WTC11 (cell line): ENCODE measurements at regions of chr5 and their contacts with region 1.

Region 1: DNA sequence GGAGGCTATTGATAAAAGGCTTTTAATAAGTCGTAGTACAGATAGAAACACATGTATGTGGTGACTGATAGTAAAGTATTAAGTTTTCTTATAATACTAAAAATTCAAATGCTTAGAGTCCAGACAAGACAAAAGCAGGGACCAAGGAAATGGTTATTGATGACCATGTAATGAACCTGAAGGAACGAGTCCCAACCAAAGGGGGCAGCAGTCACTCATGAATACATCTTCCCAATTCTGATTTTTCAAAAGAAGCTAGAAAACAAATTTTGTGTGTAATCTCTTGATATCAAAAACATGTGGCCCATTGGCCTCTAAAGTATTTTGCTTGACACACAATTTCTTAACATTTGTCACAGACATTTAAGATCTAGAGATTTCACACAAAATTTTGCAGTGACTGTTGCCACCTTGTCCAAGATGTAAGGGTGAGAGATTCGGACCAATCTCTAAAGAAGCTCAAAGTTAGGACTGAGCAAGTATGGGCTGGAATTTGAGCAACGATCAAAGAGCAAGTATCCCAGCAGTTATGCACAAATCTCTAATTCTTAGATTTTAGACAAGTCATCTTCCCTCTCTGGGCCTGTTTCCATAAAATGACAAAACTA is 66.8 kb downstream of the ARL15 start:
- DNase-seq: no peak
- ATAC-seq: peak; percentile 69
- H3K4me3 Mint-ChIP-seq: no peak overlapping the region
- H3K27ac Mint-ChIP-seq: no peak overlapping the region
- H3K4me1 Mint-ChIP-seq: no peaks in the 10 kb centered on the region
- H3K27me3 Mint-ChIP-seq: no peaks in the 10 kb centered on the region
- CTCF ChIP-seq: peak; percentile 54

Region 2: DNA sequence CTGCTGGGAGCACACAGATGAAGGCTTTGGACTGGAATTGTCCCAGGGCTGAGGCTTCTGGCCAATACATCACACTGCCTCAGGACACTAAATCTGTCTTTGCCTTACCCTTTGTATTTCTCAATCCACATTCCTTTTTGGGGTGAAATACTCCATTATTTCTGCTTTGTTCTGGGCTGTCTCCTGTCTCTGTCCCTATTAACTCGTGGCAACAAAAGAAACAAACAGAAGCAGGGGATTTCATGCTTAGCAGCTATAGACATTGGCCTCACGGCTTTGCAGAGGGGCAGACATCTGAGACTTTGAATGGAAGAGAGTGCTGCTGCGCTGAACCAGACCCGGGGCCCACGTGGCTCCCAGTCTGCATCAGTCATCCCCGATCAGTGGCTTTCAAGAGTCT is 63.0 kb before region 1 on chr5:
- CTCF ChIA-PET with region 1: no interaction called
- POLR2A ChIA-PET with region 1: no interaction called
- DNase-seq: no peak
- ATAC-seq: peak; percentile 86
- H3K4me3 Mint-ChIP-seq: no peak overlapping the region
- H3K27ac Mint-ChIP-seq: peak overlapping the region; percentile 63; the same call in 1 of the 2 replicates
- H3K4me1 Mint-ChIP-seq: peaks cover 24% of the 10 kb centered on the region
- H3K27me3 Mint-ChIP-seq: no peaks in the 10 kb centered on the region
- CTCF ChIP-seq: no peak

Region 3: GRCh38 chr5:54254482-54255198 is 11.1 kb after region 1 on chr5:
- CTCF ChIA-PET with region 1: interaction called, 14 read pairs
- POLR2A ChIA-PET with region 1: no interaction called
- DNase-seq: no peak
- ATAC-seq: peak; percentile 73
- H3K4me3 Mint-ChIP-seq: no peak overlapping the region
- H3K27ac Mint-ChIP-seq: no peak overlapping the region
- H3K4me1 Mint-ChIP-seq: peaks cover 30% of the 10 kb centered on the region
- H3K27me3 Mint-ChIP-seq: no peaks in the 10 kb centered on the region
- CTCF ChIP-seq: no peak

Region 4: GRCh38 chr5:54310433-54311175 is 67.0 kb after region 1 on chr5 and contains the start of gene ARL15:
- CTCF ChIA-PET with region 1: interaction called, 18 read pairs
- POLR2A ChIA-PET with region 1: interaction called, 4 read pairs
- DNase-seq: peak; percentile 98
- ATAC-seq: peak; percentile 90
- H3K4me3 Mint-ChIP-seq: peak within 1 kb of the TSS; percentile 92
- H3K27ac Mint-ChIP-seq: peak within 1 kb of the TSS; percentile 93
- H3K4me1 Mint-ChIP-seq: peaks cover 36% of the 10 kb centered on the region
- H3K27me3 Mint-ChIP-seq: peaks cover 20% of the 10 kb centered on the region
- CTCF ChIP-seq: no peak
- total RNA-seq, gene ARL15: 20.1 to 23.9 TPM (median 21.5 TPM) in 3 replicates

Region 5: DNA sequence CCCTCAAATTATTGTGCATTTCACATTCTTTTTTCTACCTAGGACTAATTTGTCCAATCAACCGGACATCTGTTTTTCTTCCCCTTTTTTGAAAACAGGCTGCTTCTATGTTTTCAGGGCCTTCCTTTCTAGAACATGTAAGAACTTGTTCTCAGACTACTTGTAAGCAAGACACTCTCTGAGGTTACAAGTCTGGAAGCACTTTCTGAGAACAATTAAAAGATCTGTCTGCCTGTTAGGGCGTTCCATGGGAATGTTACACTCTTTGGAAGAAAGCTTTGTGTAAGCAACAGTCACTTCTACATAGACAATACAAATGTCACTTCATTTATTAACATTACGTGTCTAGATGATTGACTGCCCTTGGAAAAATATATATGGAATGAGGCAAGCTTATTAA is 161.0 kb after region 1 on chr5:
- CTCF ChIA-PET with region 1: interaction called, 11 read pairs
- POLR2A ChIA-PET with region 1: no interaction called
- DNase-seq: no peak
- ATAC-seq: no peak
- H3K4me3 Mint-ChIP-seq: no peak overlapping the region
- H3K27ac Mint-ChIP-seq: peak overlapping the region; percentile 14
- H3K4me1 Mint-ChIP-seq: peaks cover 24% of the 10 kb centered on the region
- H3K27me3 Mint-ChIP-seq: no peaks in the 10 kb centered on the region
- CTCF ChIP-seq: no peak

Region 6: GRCh38 chr5:54415896-54416601 is 172.5 kb after region 1 on chr5:
- CTCF ChIA-PET with region 1: interaction called, 32 read pairs
- POLR2A ChIA-PET with region 1: no interaction called
- DNase-seq: no peak
- ATAC-seq: no peak
- H3K4me3 Mint-ChIP-seq: no peak overlapping the region
- H3K27ac Mint-ChIP-seq: no peak overlapping the region
- H3K4me1 Mint-ChIP-seq: peaks cover 16% of the 10 kb centered on the region
- H3K27me3 Mint-ChIP-seq: no peaks in the 10 kb centered on the region
- CTCF ChIP-seq: no peak

Region 7: DNA sequence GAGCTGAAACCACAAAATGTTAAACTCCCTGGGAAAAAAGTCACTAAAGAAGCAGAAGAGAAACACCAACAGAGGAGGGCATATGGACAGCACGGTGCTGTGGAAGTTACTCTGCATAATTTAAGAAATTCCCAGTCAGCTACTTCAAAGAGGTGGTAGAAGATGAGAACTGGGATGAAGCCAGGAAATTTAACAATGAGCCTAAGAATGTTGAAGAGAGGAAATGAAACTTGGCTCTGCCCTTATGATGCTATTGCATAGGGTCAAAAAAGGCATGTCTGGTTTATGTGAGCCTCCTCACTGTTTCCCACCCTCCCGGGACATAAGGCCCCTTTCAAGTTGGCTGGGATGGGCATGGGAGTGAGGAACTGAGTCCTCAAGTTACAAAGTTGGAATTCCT is 248.6 kb after region 1 on chr5:
- CTCF ChIA-PET with region 1: interaction called, 49 read pairs
- POLR2A ChIA-PET with region 1: no interaction called
- DNase-seq: no peak
- ATAC-seq: no peak
- H3K4me3 Mint-ChIP-seq: no peak overlapping the region
- H3K27ac Mint-ChIP-seq: no peak overlapping the region
- H3K4me1 Mint-ChIP-seq: no peaks in the 10 kb centered on the region
- H3K27me3 Mint-ChIP-seq: no peaks in the 10 kb centered on the region
- CTCF ChIP-seq: no peak

Region 8: DNA sequence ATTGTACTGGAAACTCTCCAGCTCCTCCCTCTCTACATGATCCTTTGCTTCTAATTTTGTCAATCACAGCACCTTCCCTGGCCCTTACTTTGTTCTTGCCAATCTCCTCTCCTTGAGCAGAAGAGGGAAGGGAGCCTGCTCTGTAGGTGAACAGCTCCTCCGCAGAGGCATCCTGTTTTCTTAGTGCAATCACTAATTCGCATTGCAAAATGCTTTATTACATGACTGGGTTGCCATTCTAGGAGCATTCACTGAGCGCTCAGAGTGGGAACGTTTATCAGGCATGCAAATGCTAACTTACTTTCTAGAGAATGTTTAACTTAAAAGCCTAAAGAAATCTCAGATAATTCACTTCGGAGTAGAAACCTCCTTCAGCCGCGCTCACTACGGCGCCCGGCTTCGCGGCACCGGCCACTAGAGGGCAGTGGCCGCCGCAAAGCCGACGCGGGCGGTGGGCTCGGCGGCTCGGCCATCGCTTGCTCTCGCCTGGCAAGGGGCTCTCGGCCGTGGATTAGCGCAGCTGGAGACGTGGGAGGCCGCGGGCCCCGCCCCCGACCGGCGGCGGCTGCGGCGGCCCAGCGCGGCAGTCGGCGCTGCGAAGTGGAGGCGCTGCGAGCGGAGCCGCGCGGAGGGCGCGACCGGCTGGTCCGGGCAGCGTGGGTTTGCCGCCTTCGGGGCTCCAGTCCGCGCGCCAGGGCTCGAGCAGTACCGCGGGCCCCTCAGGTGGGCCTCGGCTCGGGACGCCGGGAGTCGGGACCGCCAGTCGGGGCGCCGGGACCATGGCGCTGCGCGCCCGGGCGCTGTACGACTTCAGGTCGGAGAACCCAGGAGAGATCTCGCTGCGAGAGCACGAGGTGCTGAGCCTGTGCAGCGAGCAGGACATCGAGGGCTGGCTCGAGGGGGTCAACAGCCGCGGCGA is 273.9 kb after region 1 on chr5 and contains the start of gene SNX18:
- CTCF ChIA-PET with region 1: interaction called, 17 read pairs
- POLR2A ChIA-PET with region 1: interaction called, 3 read pairs
- DNase-seq: peak; percentile 88
- ATAC-seq: peak; percentile 62
- H3K4me3 Mint-ChIP-seq: peak within 1 kb of the TSS; percentile 70
- H3K27ac Mint-ChIP-seq: no peak within 1 kb of the TSS
- H3K4me1 Mint-ChIP-seq: peaks cover 34% of the 10 kb centered on the region
- H3K27me3 Mint-ChIP-seq: peaks cover 14% of the 10 kb centered on the region
- CTCF ChIP-seq: peak; percentile 85
- total RNA-seq, gene SNX18: 20.3 to 24.6 TPM (median 23.6 TPM) in 3 replicates